ENCODE measurements at regions of chr2 and their contacts with region 1.

Region 1: DNA sequence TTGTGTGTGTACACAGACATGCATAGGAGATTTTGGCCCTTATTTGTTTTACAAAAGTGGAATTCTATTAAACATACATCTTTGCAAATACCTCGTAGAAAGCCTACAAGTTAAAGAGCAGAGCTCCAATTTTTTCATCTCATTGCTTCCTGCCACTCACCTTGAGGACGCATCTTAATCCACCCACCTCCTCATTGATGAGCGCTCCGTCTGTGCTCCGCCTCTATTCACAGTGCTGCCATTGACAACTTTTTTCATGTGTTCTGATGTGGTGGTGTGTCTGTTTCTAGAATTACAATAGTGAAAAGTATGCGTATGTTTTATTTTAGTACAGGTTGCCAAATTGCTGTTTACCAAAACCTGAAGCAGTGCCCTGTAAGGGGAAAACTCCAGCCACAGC is 36.3 kb downstream of the NEURL3 start:
- DNase-seq: no peak
- H3K4me3 ChIP-seq: no peak overlapping the region
- CTCF ChIP-seq: no peak

Region 2: GRCh38 chr2:95568500-95568899 is 900.4 kb before region 1 on chr2:
- in situ Hi-C with region 1: no loop called
- DNase-seq: no peak
- H3K4me3 ChIP-seq: no peak overlapping the region
- CTCF ChIP-seq: no peak

Region 3: DNA sequence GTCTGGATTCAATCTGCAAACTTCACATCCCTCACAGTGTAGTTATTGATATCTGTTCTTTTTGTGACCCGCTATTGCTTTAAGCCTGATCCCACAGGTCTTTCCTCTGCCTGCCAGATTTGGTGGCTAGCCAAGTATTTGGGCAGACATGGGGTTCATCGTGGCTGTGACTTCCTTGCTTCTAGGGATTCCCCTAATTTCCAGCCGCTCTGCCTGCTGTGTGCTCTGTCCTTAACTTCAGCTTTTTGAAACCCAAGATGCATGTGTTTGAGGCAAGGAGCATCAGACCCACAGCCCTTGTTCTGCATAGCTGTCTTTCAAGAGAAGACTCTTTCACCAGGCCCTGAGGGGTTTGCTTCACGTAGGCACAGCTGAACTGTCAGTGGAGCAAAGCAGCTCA is 79.2 kb before region 1 on chr2:
- in situ Hi-C with region 1: loop called (anchors 5 kb)
- DNase-seq: no peak
- H3K4me3 ChIP-seq: no peak overlapping the region
- CTCF ChIP-seq: no peak

Measured in astrocyte of the cerebellum (primary cell).